PC-9 (cell line): ENCODE measurements at regions of chr3 and their contacts with region 1.

Region 1: DNA sequence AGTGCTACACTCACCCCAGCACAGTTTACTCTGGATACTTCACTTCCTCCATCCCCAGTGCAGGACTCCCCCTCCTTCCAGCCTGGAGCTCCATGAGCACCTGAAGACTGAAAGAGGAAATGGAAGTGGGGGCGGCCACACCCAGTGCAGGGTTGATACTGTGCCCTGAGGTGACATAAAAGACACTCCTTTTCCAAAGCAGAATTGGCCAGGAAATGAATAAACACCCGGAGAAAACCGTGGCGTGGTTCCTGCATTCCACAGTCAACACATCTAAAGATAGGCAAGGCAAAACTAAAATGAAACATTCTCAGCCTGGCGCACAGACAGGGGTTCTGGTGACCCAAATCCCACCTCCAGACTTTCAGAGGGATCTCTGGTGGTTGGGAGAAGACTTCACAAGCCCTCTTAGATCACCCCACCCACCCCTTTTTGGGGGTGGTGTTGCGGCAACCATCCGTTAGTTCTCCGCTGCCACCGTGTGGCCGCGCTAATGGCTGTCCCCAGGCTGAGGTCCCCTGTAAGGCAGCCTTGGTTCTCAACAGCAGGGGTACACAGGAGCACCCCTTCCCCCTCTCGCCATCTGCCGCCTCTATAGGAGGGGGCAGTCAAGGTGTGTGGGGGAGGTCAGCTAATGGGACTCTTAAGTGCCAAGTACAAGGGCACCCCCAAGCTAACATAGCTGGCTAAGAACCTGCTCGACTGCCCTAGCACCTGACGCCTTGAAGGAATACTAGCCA is 2.5 kb upstream of the MST1R start:
- DNase-seq: peak; percentile 73 to 78
- H3K4me3 ChIP-seq: peak overlapping the region; percentile 43; the same call in 1 of the 2 replicates
- H3K27ac ChIP-seq: peak overlapping the region; percentile 50
- H3K4me1 ChIP-seq: peaks cover 38% of the 10 kb centered on the region
- H3K27me3 ChIP-seq: no peaks in the 10 kb centered on the region
- CTCF ChIP-seq: peak; percentile 70

Region 2: GRCh38 chr3:49723628-49724551 is 182.3 kb before region 1 on chr3 and contains the start of gene GMPPB:
- CTCF ChIA-PET with region 1: no interaction called
- POLR2A ChIA-PET with region 1: no interaction called
- intact Hi-C with region 1: loop called (anchors 1 kb)
- DNase-seq: peak; percentile 93 to 96
- H3K4me3 ChIP-seq: peak within 1 kb of the TSS; percentile 86
- H3K27ac ChIP-seq: peak within 1 kb of the TSS; percentile 78
- H3K4me1 ChIP-seq: peaks cover 13% of the 10 kb centered on the region; the same call in 1 of the 2 replicates
- H3K27me3 ChIP-seq: no peaks in the 10 kb centered on the region
- CTCF ChIP-seq: no peak
- total RNA-seq, gene GMPPB: 20.4 and 24.2 TPM in 2 replicates

Region 3: DNA sequence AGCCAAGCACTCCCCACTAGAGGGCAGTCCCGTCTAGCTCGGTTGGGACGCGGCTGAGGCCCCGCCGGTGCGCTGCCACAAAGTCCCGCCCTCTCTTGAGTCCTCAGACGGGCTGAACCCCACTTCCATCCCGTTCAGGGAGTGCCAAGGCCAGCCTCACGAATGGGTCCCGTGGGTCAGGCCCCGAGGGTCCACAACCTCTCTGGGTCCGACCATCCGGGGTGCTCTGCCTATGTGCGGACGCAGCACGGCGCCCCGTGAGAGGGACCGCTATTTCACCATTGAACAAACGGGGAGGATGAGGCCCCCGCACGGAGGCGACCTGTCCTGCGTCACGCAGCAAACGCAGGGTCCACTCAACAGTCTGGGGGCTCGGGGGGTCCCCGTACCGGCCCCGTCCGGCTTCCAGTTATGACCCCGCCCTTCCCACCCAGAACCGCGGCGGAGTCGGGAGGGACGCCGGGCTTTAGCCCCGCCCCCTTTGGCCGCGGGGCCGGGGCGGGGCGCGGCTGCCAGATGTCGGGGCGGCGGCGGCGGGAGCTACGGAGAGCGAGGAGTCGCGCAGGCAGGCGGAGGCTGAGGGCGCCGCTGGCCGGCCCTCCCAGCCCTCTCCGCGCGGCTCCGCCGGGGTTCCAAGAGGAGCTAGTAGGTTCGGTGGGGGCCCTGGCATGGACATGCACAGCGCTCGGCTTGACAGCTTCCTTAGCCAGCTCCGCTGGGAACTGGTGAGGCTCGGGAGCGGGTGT is 103.3 kb before region 1 on chr3 and contains the start of gene INKA1:
- CTCF ChIA-PET with region 1: interaction called, 7 read pairs
- POLR2A ChIA-PET with region 1: no interaction called
- intact Hi-C with region 1: loop called (anchors 1 kb)
- DNase-seq: peak; percentile 65 to 85
- H3K4me3 ChIP-seq: peak within 1 kb of the TSS; percentile 84
- H3K27ac ChIP-seq: no peak within 1 kb of the TSS
- H3K4me1 ChIP-seq: peaks cover 11% of the 10 kb centered on the region; the same call in 1 of the 2 replicates
- H3K27me3 ChIP-seq: peaks cover 9% of the 10 kb centered on the region
- CTCF ChIP-seq: peak; percentile 81; the same call in 1 of the 2 replicates
- total RNA-seq, gene INKA1: 0.40 TPM in 1 of 2 replicates, not detected in the other

Region 4: GRCh38 chr3:49856181-49857005 is 49.8 kb before region 1 on chr3 and contains the start of gene TRAIP:
- CTCF ChIA-PET with region 1: no interaction called
- POLR2A ChIA-PET with region 1: no interaction called
- intact Hi-C with region 1: loop called (anchors 1 kb)
- DNase-seq: peak; percentile 83 to 93
- H3K4me3 ChIP-seq: peak within 1 kb of the TSS; percentile 80
- H3K27ac ChIP-seq: no peak within 1 kb of the TSS
- H3K4me1 ChIP-seq: 0 out of 2 replicates have a peak, but pooled peaks cover 3% of the 10 kb centered on the region
- H3K27me3 ChIP-seq: peaks cover 2% of the 10 kb centered on the region; the same call in 1 of the 2 replicates
- CTCF ChIP-seq: no peak
- total RNA-seq, gene TRAIP: 18.1 and 20.6 TPM in 2 replicates

Region 5: DNA sequence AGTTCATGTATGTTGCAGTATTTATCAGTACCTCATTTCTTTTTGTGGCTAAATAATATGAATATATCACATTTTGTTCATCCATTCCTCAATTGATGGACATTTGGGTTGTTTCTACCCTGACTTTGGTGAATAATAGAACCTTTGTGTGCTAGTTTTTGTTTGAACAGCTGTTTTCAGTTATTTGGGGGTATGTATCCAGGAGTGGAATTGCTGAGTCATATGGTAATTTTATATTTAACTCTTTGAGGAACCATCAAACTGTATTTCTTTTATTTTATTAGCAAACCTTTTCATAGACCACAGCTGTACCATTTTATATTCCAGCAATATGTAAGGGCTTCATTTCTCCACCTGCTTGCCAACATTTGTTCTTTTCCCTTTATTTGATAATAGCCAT is 144.2 kb after region 1 on chr3:
- CTCF ChIA-PET with region 1: no interaction called
- POLR2A ChIA-PET with region 1: no interaction called
- intact Hi-C with region 1: no loop called
- DNase-seq: no peak
- H3K4me3 ChIP-seq: no peak overlapping the region
- H3K27ac ChIP-seq: no peak overlapping the region
- H3K4me1 ChIP-seq: no peaks in the 10 kb centered on the region
- H3K27me3 ChIP-seq: no peaks in the 10 kb centered on the region
- CTCF ChIP-seq: no peak